Heart right ventricle (tissue), 16 donors: ENCODE measurements at regions of chr9 and their contacts with region 1.

Region 1: GRCh38 chr9:133715866-133716563 is 22.1 kb downstream of the SARDH start:
- DNase-seq: no peak
- ATAC-seq: peak; percentile 4 to 54 (median 28)
- H3K4me3 ChIP-seq: no peak overlapping the region
- H3K27ac ChIP-seq: peak overlapping the region in 8 of 10 donors; percentile 45 to 78 (median 58)
- H3K4me1 ChIP-seq: peaks cover 5 to 36% (median 18%) of the 10 kb centered on the region in 9 donors
- H3K27me3 ChIP-seq: peaks cover 0 to 34% (median 31%) of the 10 kb centered on the region in 7 donors
- CTCF ChIP-seq: peak in 8 of 9 donors; percentile 23 to 67 (median 53)

Region 2: GRCh38 chr9:133589454-133590227 is 126.4 kb before region 1 on chr9:
- intact Hi-C with region 1: loop called in 1 of 10 experiments (anchors 10 kb)
- DNase-seq: no peak
- ATAC-seq: no peak
- H3K4me3 ChIP-seq: no peak overlapping the region
- H3K27ac ChIP-seq: no peak overlapping the region
- H3K4me1 ChIP-seq: peaks cover 0 to 17% (median 12%) of the 10 kb centered on the region in 9 donors
- H3K27me3 ChIP-seq: peaks cover 0 to 54% (median 33%) of the 10 kb centered on the region in 7 donors
- CTCF ChIP-seq: peak in 8 of 9 donors; percentile 28 to 61 (median 48)